ENCODE measurements at regions of chr10 and their contacts with region 1.

Region 1: GRCh38 chr10:62610649-62611229 is 193.8 kb upstream of the ADO start:
- DNase-seq: peak; percentile 48 to 84 (median 70)
- ATAC-seq: peak; percentile 97
- H3K4me3 ChIP-seq: no peak overlapping the region
- H3K4me3 Mint-ChIP-seq: no peak overlapping the region
- H3K27ac ChIP-seq: no peak overlapping the region
- H3K27ac Mint-ChIP-seq: no peak overlapping the region
- H3K4me1 ChIP-seq: no peaks in the 10 kb centered on the region
- H3K4me1 Mint-ChIP-seq: peaks cover 3% of the 10 kb centered on the region
- H3K27me3 ChIP-seq: no peaks in the 10 kb centered on the region
- H3K27me3 Mint-ChIP-seq: no peaks in the 10 kb centered on the region
- CTCF ChIP-seq: peak; percentile 89

Region 2: GRCh38 chr10:62681211-62681940 is 70.6 kb after region 1 on chr10:
- CTCF ChIA-PET with region 1: interaction called, 3 read pairs
- POLR2A ChIA-PET with region 1: no interaction called
- intact Hi-C with region 1: loop called in 1 of 2 experiments (anchors 5 kb)
- DNase-seq: peak; percentile 18 to 94 (median 57)
- ATAC-seq: peak; percentile 94
- H3K4me3 ChIP-seq: no peak overlapping the region
- H3K4me3 Mint-ChIP-seq: no peak overlapping the region
- H3K27ac ChIP-seq: peak overlapping the region in 1 of 2 experiments; percentile 20
- H3K27ac Mint-ChIP-seq: peak overlapping the region; percentile 58
- H3K4me1 ChIP-seq: peaks cover 14% of the 10 kb centered on the region
- H3K4me1 Mint-ChIP-seq: peaks cover 23% of the 10 kb centered on the region
- H3K27me3 ChIP-seq: no peaks in the 10 kb centered on the region
- H3K27me3 Mint-ChIP-seq: peaks cover 6% of the 10 kb centered on the region
- CTCF ChIP-seq: no peak

Region 3: GRCh38 chr10:63003816-63004453 is 393.2 kb after region 1 on chr10:
- CTCF ChIA-PET with region 1: interaction called, 5 read pairs
- POLR2A ChIA-PET with region 1: no interaction called
- intact Hi-C with region 1: loop called in 1 of 2 experiments (anchors 5 kb)
- DNase-seq: peak in 2 of 9 experiments; percentile 4 to 13
- ATAC-seq: no peak
- H3K4me3 ChIP-seq: no peak overlapping the region
- H3K4me3 Mint-ChIP-seq: no peak overlapping the region
- H3K27ac ChIP-seq: no peak overlapping the region
- H3K27ac Mint-ChIP-seq: no peak overlapping the region
- H3K4me1 ChIP-seq: no peaks in the 10 kb centered on the region
- H3K4me1 Mint-ChIP-seq: no peaks in the 10 kb centered on the region
- H3K27me3 ChIP-seq: peaks cover 0 to 1% of the 10 kb centered on the region in 2 experiments
- H3K27me3 Mint-ChIP-seq: peaks cover 17% of the 10 kb centered on the region
- CTCF ChIP-seq: peak; percentile 9

Region 4: DNA sequence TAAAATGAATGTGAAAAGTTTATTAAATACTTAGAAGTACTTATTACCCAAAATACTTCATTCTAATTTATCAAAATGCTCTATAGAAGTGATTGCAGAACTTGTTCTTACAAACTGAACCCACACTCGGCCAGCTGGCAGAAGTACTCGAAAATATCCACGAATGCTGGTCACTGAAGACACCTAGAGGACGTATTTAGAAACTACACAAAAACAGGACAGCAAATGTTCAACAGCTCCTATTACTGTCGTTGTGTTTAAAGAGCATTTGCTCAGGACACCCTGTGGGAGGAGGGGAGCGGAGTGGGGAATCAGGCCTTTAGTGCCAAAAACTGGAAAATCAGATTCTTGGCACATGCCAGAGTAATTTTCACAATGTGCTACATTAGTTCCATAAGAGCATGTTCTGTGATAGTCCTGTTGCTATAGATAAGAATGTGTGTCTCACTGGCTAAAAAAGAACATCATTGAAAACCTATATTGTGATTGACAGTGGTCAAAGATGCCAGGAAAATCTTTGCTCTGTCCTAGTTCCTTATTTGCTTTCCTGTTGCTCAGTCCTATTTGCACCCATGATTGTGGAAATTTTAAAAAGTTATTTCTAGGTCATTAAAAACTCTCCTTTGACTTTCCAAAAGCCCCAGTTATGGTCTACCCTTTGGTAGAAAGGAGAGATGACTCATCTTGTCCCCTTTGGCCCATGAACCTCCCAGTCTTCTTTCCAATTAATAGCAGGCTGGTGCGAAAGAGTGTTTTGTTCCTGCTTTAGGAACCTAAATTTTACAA is 473.4 kb after region 1 on chr10:
- CTCF ChIA-PET with region 1: interaction called, 19 read pairs
- POLR2A ChIA-PET with region 1: no interaction called
- intact Hi-C with region 1: loop called (anchors 5 kb)
- DNase-seq: peak in 8 of 9 experiments; percentile 7 to 76 (median 40)
- ATAC-seq: peak; percentile 51
- H3K4me3 ChIP-seq: no peak overlapping the region
- H3K4me3 Mint-ChIP-seq: no peak overlapping the region
- H3K27ac ChIP-seq: no peak overlapping the region
- H3K27ac Mint-ChIP-seq: no peak overlapping the region
- H3K4me1 ChIP-seq: no peaks in the 10 kb centered on the region
- H3K4me1 Mint-ChIP-seq: no peaks in the 10 kb centered on the region
- H3K27me3 ChIP-seq: no peaks in the 10 kb centered on the region
- H3K27me3 Mint-ChIP-seq: peaks cover 9% of the 10 kb centered on the region
- CTCF ChIP-seq: peak; percentile 77